ENCODE measurements at regions of chr2 and their contacts with region 1.

Region 1: GRCh38 chr2:181891966-181892798 is 652 bp downstream of the ITPRID2 start:
- DNase-seq: peak; percentile 80
- ATAC-seq: peak; percentile 52
- H3K4me3 ChIP-seq: peak overlapping the region; percentile 76 to 92 (median 88)
- H3K4me3 Mint-ChIP-seq: peak overlapping the region; percentile 94
- H3K27ac ChIP-seq: peak overlapping the region; percentile 48 to 70
- H3K27ac Mint-ChIP-seq: peak overlapping the region; percentile 81
- H3K4me1 ChIP-seq: peaks cover 4 to 14% of the 10 kb centered on the region in 2 donors
- H3K4me1 Mint-ChIP-seq: peaks cover 31% of the 10 kb centered on the region
- H3K27me3 ChIP-seq: peaks cover 0 to 12% (median 2%) of the 10 kb centered on the region in 4 experiments
- H3K27me3 Mint-ChIP-seq: peaks cover 13% of the 10 kb centered on the region
- CTCF ChIP-seq: peak; percentile 48

Region 2: GRCh38 chr2:180125245-180125962 is 1766.8 kb before region 1 on chr2:
- CTCF ChIA-PET with region 1: no interaction called
- POLR2A ChIA-PET with region 1: no interaction called
- intact Hi-C with region 1: loop called (anchors 2 kb)
- DNase-seq: peak; percentile 55
- ATAC-seq: peak; percentile 93
- H3K4me3 ChIP-seq: no peak overlapping the region
- H3K4me3 Mint-ChIP-seq: no peak overlapping the region
- H3K27ac ChIP-seq: no peak overlapping the region
- H3K27ac Mint-ChIP-seq: no peak overlapping the region
- H3K4me1 ChIP-seq: peaks cover 0 to 5% of the 10 kb centered on the region in 2 donors
- H3K4me1 Mint-ChIP-seq: peaks cover 4% of the 10 kb centered on the region
- H3K27me3 ChIP-seq: peaks cover 0 to 4% (median 0%) of the 10 kb centered on the region in 4 experiments
- H3K27me3 Mint-ChIP-seq: peaks cover 18% of the 10 kb centered on the region
- CTCF ChIP-seq: peak; percentile 66

Region 3: DNA sequence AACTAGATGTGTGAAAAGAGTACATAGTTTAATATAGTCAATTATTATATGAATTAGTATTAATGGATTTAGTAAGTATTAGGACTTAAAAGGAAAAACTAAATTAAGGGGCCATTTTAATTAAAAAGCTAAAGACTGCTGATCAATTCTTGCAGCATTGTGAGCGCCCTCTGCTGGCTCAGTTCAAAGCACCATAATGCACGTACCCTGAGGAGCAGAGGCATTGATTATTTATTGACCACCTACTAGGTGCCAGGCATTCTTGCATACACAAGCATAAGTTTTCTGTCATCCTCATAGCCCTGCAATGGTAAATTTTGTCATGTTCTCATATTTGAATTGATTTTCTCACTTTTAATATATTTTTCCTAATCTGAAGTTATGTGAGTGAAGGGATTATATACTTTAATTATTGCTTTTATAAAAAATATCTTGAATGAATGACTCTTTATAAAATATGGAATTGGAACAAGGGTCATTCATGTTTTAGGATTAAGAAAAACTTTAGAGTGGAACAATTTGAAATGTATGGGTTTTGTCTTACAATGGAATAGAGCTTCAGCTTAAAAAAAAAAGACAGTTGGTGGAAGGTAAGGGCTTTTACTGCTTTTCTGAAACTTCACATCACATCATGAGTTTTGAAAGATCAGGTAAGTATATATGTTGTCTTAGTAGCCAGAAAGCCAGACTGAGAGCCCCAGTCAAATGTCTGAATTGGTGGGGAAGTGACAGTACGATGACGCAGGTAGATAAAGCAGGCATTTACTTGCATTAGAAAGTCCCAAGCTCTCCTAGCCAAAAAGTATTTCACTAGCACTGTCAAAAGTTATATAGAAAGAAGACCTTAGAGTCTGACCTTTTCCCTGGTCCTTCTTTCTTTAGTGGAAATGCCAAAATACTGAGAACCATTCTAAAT is 425.3 kb before region 1 on chr2:
- CTCF ChIA-PET with region 1: no interaction called
- POLR2A ChIA-PET with region 1: no interaction called
- intact Hi-C with region 1: loop called (anchors 10 kb)
- DNase-seq: peak; percentile 84
- ATAC-seq: peak; percentile 52
- H3K4me3 ChIP-seq: no peak overlapping the region
- H3K4me3 Mint-ChIP-seq: no peak overlapping the region
- H3K27ac ChIP-seq: peak overlapping the region in 1 of 2 donors; percentile 69
- H3K27ac Mint-ChIP-seq: no peak overlapping the region
- H3K4me1 ChIP-seq: peaks cover 56 to 81% of the 10 kb centered on the region in 2 donors
- H3K4me1 Mint-ChIP-seq: peaks cover 87% of the 10 kb centered on the region
- H3K27me3 ChIP-seq: no peaks in the 10 kb centered on the region
- H3K27me3 Mint-ChIP-seq: no peaks in the 10 kb centered on the region
- CTCF ChIP-seq: peak; percentile 91

Region 4: GRCh38 chr2:181904022-181904632 is 11.9 kb after region 1 on chr2:
- CTCF ChIA-PET with region 1: interaction called, 54 read pairs
- POLR2A ChIA-PET with region 1: interaction called, 3 read pairs
- intact Hi-C with region 1: loop called (anchors 1 kb)
- DNase-seq: peak; percentile 58
- ATAC-seq: peak; percentile 49
- H3K4me3 ChIP-seq: no peak overlapping the region
- H3K4me3 Mint-ChIP-seq: no peak overlapping the region
- H3K27ac ChIP-seq: no peak overlapping the region
- H3K27ac Mint-ChIP-seq: no peak overlapping the region
- H3K4me1 ChIP-seq: peaks cover 0 to 4% of the 10 kb centered on the region in 2 donors
- H3K4me1 Mint-ChIP-seq: peaks cover 2% of the 10 kb centered on the region
- H3K27me3 ChIP-seq: no peaks in the 10 kb centered on the region
- H3K27me3 Mint-ChIP-seq: no peaks in the 10 kb centered on the region
- CTCF ChIP-seq: peak; percentile 83

Region 5: GRCh38 chr2:183124222-183124956 is 1232.2 kb after region 1 on chr2 and contains the start of gene NUP35:
- CTCF ChIA-PET with region 1: no interaction called
- POLR2A ChIA-PET with region 1: no interaction called
- intact Hi-C with region 1: loop called (anchors 10 kb)
- DNase-seq: peak; percentile 89
- ATAC-seq: peak; percentile 97
- H3K4me3 ChIP-seq: peak within 1 kb of the TSS; percentile 82 to 98 (median 94)
- H3K4me3 Mint-ChIP-seq: peak within 1 kb of the TSS; percentile 93
- H3K27ac ChIP-seq: peak within 1 kb of the TSS; percentile 84 to 87
- H3K27ac Mint-ChIP-seq: peak within 1 kb of the TSS; percentile 93
- H3K4me1 ChIP-seq: peaks cover 3 to 15% of the 10 kb centered on the region in 2 donors
- H3K4me1 Mint-ChIP-seq: peaks cover 22% of the 10 kb centered on the region
- H3K27me3 ChIP-seq: peaks cover 0 to 9% (median 5%) of the 10 kb centered on the region in 4 experiments
- H3K27me3 Mint-ChIP-seq: peaks cover 17% of the 10 kb centered on the region
- CTCF ChIP-seq: no peak
- total RNA-seq, gene NUP35: 21.9 and 26.0 TPM in 2 replicates

Measured in B cell (primary cell).